PC-9 (cell line): ENCODE measurements at regions of chr13 and their contacts with region 1.

Region 1: GRCh38 chr13:104318121-104318520 is 1251.9 kb upstream of the SLC10A2 start:
- DNase-seq: no peak
- H3K4me3 ChIP-seq: no peak overlapping the region
- H3K27ac ChIP-seq: no peak overlapping the region
- H3K4me1 ChIP-seq: peaks cover 15% of the 10 kb centered on the region
- H3K27me3 ChIP-seq: no peaks in the 10 kb centered on the region
- CTCF ChIP-seq: peak; percentile 55; the same call in 1 of the 2 replicates

Region 2: DNA sequence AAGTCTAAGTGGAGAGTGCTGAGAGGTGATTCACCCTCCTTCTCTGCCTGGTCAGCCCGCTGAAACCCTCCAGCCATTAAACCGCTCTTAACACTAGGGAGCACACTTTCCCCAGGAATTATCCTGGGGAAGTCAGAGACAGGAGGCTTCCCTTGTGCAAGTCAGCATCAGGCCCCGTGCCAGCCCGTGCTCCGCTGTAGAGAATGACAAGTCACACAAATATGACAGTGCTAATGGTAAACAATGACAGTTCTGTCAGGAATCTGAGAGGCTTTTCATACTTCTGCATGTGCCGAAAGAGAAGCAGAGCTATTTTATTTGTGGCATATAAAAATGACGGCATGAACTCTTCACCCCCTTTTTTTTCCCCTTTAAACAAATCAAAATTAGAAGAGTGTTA is 435.0 kb before region 1 on chr13:
- CTCF ChIA-PET with region 1: no interaction called
- POLR2A ChIA-PET with region 1: no interaction called
- intact Hi-C with region 1: loop called (anchors 5 kb)
- DNase-seq: peak; percentile 91 to 98
- H3K4me3 ChIP-seq: no peak overlapping the region
- H3K27ac ChIP-seq: 0 out of 2 replicates have a peak overlapping the region, but pooled peaks have one; percentile 29
- H3K4me1 ChIP-seq: peaks cover 7% of the 10 kb centered on the region
- H3K27me3 ChIP-seq: no peaks in the 10 kb centered on the region
- CTCF ChIP-seq: peak; percentile 77

Region 3: DNA sequence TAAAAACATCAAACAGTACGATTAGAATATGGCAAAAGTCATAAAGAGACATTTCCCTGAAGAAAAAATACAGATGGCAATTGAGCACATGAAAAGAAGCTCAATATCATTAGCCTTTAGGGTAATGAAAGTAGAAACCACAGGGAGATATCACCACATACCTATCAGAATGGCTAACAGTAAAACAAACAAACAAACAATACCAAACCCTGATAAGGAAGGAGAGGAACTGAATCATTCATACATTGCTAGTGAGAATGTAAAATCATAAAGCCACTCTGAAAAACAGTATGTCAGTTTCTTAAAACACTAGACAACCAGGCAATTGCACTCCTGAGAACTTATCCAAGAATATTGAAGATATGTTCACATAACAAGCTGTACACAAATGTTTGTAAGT is 90.6 kb after region 1 on chr13:
- CTCF ChIA-PET with region 1: no interaction called
- POLR2A ChIA-PET with region 1: no interaction called
- intact Hi-C with region 1: loop called (anchors 5 kb)
- DNase-seq: peak in 1 of 2 experiments; percentile 70
- H3K4me3 ChIP-seq: no peak overlapping the region
- H3K27ac ChIP-seq: 0 out of 2 replicates have a peak overlapping the region, but pooled peaks have one; percentile 2
- H3K4me1 ChIP-seq: peaks cover 20% of the 10 kb centered on the region
- H3K27me3 ChIP-seq: no peaks in the 10 kb centered on the region
- CTCF ChIP-seq: no peak

Region 4: DNA sequence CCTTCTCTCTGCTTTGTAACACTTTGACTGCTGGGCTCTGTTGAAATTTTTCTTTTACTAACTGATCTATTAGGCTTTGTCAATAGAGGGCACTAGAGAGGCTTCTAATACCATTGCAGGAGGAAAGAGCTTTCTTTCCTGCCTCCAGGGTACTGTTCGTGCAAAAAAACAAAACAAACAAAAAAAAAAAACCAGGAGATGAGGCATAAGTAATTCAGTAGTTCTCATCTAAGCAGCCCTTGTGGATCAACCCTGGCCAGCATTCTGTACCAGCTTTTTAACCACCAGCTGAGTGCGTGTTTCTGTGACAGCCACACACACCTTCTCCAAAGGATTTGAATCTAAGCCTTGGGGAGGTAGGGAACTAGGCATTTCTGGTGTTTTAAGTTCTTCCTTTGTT is 455.7 kb after region 1 on chr13:
- CTCF ChIA-PET with region 1: interaction called, 4 read pairs
- POLR2A ChIA-PET with region 1: no interaction called
- intact Hi-C with region 1: loop called (anchors 10 kb)
- DNase-seq: peak in 1 of 2 experiments; percentile 45
- H3K4me3 ChIP-seq: no peak overlapping the region
- H3K27ac ChIP-seq: no peak overlapping the region
- H3K4me1 ChIP-seq: no peaks in the 10 kb centered on the region
- H3K27me3 ChIP-seq: no peaks in the 10 kb centered on the region
- CTCF ChIP-seq: peak; percentile 76